OCI-LY7 (cell line): ENCODE measurements at regions of chr6 and their contacts with region 1.

Region 1: DNA sequence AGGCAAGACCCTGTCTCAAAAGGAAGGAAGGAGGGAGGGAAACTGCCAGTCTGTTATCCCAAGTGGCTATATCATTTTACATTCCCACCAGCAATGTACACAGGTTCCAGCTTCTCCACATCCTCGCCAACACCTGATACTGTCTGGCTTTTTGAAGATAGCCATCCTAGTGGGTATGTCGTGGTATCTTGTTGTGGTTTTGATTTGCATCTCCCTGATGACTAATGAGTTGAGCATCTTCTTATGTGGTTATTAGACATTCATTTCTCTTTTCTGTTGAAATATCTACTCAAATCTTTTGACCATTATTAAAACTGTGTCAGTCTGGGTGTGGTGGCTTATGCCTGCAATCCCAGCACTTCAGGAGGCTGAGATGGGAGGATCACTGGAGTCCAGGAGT is 47.9 kb upstream of the ARID1B start:
- DNase-seq: no peak
- H3K4me3 ChIP-seq: no peak overlapping the region
- H3K27ac ChIP-seq: no peak overlapping the region
- H3K4me1 ChIP-seq: peaks cover 38% of the 10 kb centered on the region
- CTCF ChIP-seq: no peak

Region 2: GRCh38 chr6:156767603-156768467 is 38.6 kb after region 1 on chr6:
- CTCF ChIA-PET with region 1: no interaction called
- POLR2A ChIA-PET with region 1: interaction called, 10 read pairs
- intact Hi-C with region 1: no loop called
- DNase-seq: peak; percentile 80
- H3K4me3 ChIP-seq: no peak overlapping the region
- H3K27ac ChIP-seq: no peak overlapping the region
- H3K4me1 ChIP-seq: peaks cover 26% of the 10 kb centered on the region
- CTCF ChIP-seq: no peak; the same call in 1 of the 2 replicates

Region 3: GRCh38 chr6:157954150-157955117 is 1225.2 kb after region 1 on chr6:
- CTCF ChIA-PET with region 1: no interaction called
- POLR2A ChIA-PET with region 1: no interaction called
- intact Hi-C with region 1: no loop called
- DNase-seq: no peak
- H3K4me3 ChIP-seq: no peak overlapping the region
- H3K27ac ChIP-seq: no peak overlapping the region
- H3K4me1 ChIP-seq: no peaks in the 10 kb centered on the region
- CTCF ChIP-seq: no peak